Sigmoid colon (tissue), 7 donors: ENCODE measurements at regions of chr11 and their contacts with region 1.

Region 1: GRCh38 chr11:116499396-116500003 is 273.3 kb downstream of the BUD13 start:
- DNase-seq: peak; percentile 91
- H3K4me3 ChIP-seq: no peak overlapping the region
- H3K27ac ChIP-seq: no peak overlapping the region
- H3K4me1 ChIP-seq: peaks cover 0 to 29% (median 13%) of the 10 kb centered on the region in 4 donors
- H3K27me3 ChIP-seq: peaks cover 0 to 18% (median 0%) of the 10 kb centered on the region in 3 donors
- CTCF ChIP-seq: peak; percentile 7 to 69 (median 68)
- EP300 ChIP-seq: no peak
- POLR2A ChIP-seq: no peak

Region 2: GRCh38 chr11:116281173-116282160 is 218.0 kb before region 1 on chr11:
- intact Hi-C with region 1: loop called (anchors 10 kb)
- DNase-seq: no peak
- H3K4me3 ChIP-seq: no peak overlapping the region
- H3K27ac ChIP-seq: no peak overlapping the region
- H3K4me1 ChIP-seq: peaks cover 0 to 4% (median 2%) of the 10 kb centered on the region in 4 donors
- H3K27me3 ChIP-seq: no peaks in the 10 kb centered on the region
- CTCF ChIP-seq: no peak
- EP300 ChIP-seq: no peak
- POLR2A ChIP-seq: no peak

Region 3: GRCh38 chr11:116454020-116454645 is 45.4 kb before region 1 on chr11:
- intact Hi-C with region 1: loop called (anchors 2 kb)
- DNase-seq: peak; percentile 75
- H3K4me3 ChIP-seq: no peak overlapping the region
- H3K27ac ChIP-seq: no peak overlapping the region
- H3K4me1 ChIP-seq: peaks cover 0 to 27% (median 26%) of the 10 kb centered on the region in 4 donors
- H3K27me3 ChIP-seq: no peaks in the 10 kb centered on the region
- CTCF ChIP-seq: peak; percentile 61 to 76 (median 71)
- EP300 ChIP-seq: no peak
- POLR2A ChIP-seq: no peak